Kidney (tissue), 22 donors: ENCODE measurements at regions of chr12 and their contacts with region 1.

Region 1: GRCh38 chr12:54134850-54135249 is 53.9 kb downstream of the SMUG1 start:
- DNase-seq: peak in 4 of 5 donors; percentile 61 to 74 (median 70)
- H3K4me3 ChIP-seq: no peak overlapping the region
- H3K27ac ChIP-seq: peak overlapping the region in 1 of 2 donors; percentile 28
- H3K4me1 ChIP-seq: peaks cover 2 to 11% (median 7%) of the 10 kb centered on the region in 3 donors
- H3K27me3 ChIP-seq: no peaks in the 10 kb centered on the region
- CTCF ChIP-seq: peak; percentile 19

Region 2: GRCh38 chr12:54032627-54033100 is 102.2 kb before region 1 on chr12 and contains the start of gene HOXC5:
- intact Hi-C with region 1: loop called (anchors 10 kb)
- DNase-seq: peak; percentile 87 to 96 (median 95)
- H3K4me3 ChIP-seq: peak within 1 kb of the TSS; percentile 3 to 61 (median 51)
- H3K27ac ChIP-seq: peak within 1 kb of the TSS in 1 of 2 donors; percentile 37
- H3K4me1 ChIP-seq: peaks cover 2 to 30% (median 14%) of the 10 kb centered on the region in 3 donors
- H3K27me3 ChIP-seq: no peaks in the 10 kb centered on the region
- CTCF ChIP-seq: peak; percentile 96
- total RNA-seq, gene HOXC5: 4.8 TPM